ENCODE measurements at regions of chr6 and their contacts with region 1.

Region 1: GRCh38 chr6:139369568-139370282 is 4.7 kb downstream of the CITED2 start:
- DNase-seq: no peak
- ATAC-seq: peak in 1 of 2 donors; percentile 4
- H3K4me3 ChIP-seq: peak overlapping the region; percentile 6 to 97 (median 56)
- H3K27ac ChIP-seq: peak overlapping the region; percentile 94 to 97 (median 96)
- H3K4me1 ChIP-seq: peaks cover 24 to 30% of the 10 kb centered on the region in 2 donors
- H3K27me3 ChIP-seq: no peaks in the 10 kb centered on the region
- CTCF ChIP-seq: peak; percentile 44 to 78 (median 74)
- POLR2A ChIP-seq: no peak

Region 2: DNA sequence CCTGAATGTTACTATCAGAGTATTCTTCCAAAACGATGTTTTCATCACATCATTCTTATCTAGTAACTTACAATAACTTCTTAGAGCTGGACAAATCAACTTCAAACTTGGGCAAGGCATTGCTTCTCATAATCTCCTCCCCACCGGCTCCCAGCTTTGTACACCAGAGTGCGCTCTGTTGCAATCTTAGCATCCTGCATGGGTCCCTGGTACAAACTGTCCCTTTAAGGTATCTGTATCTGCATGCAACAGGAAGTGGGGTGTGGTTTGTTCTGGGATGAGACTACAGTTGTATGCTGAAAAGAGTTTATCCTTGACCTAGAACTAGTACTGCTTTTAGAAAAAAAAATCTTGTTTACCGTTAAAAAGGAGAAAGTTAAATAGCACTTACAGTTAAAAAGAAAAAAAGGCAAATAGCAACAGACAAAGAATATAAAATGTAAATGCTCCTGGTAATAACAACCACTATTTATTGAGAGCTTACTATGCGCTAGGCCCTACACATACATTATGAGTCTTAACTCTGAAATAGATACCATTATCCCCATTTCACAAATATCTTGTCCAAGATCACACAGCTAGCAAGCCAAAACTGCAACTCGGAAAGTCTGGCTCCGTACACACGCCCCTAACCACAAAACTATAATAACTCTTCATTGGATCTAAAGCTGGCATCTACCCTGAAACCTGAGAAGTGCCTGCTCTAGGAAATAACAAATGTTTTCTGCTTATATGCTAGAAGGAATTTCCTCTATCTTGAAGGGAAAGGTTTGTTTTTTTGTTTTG is 244.6 kb before region 1 on chr6:
- in situ Hi-C with region 1: loop called in 3 of 4 experiments (anchors 5 to 25 kb)
- intact Hi-C with region 1: no loop called
- DNase-seq: peak; percentile 46 to 51
- ATAC-seq: peak; percentile 71 to 81
- H3K4me3 ChIP-seq: no peak overlapping the region
- H3K27ac ChIP-seq: peak overlapping the region in 2 of 4 donors; percentile 30 to 43
- H3K4me1 ChIP-seq: peaks cover 10 to 17% of the 10 kb centered on the region in 2 donors
- H3K27me3 ChIP-seq: no peaks in the 10 kb centered on the region
- CTCF ChIP-seq: peak in 3 of 5 experiments; percentile 24 to 31 (median 30)
- POLR2A ChIP-seq: no peak

Region 3: GRCh38 chr6:139230391-139230840 is 139.3 kb before region 1 on chr6:
- in situ Hi-C with region 1: loop called in 3 of 4 experiments (anchors 5 kb)
- intact Hi-C with region 1: no loop called
- DNase-seq: peak; percentile 38 to 57
- ATAC-seq: peak; percentile 89 to 90
- H3K4me3 ChIP-seq: no peak overlapping the region
- H3K27ac ChIP-seq: peak overlapping the region; percentile 69 to 77 (median 71)
- H3K4me1 ChIP-seq: peaks cover 15 to 19% of the 10 kb centered on the region in 2 donors
- H3K27me3 ChIP-seq: no peaks in the 10 kb centered on the region
- CTCF ChIP-seq: peak in 1 of 5 experiments; percentile 25
- POLR2A ChIP-seq: no peak

Region 4: GRCh38 chr6:139881728-139882211 is 512.0 kb after region 1 on chr6:
- in situ Hi-C with region 1: no loop called
- intact Hi-C with region 1: loop called (anchors 2 kb)
- DNase-seq: no peak
- ATAC-seq: peak; percentile 33 to 48
- H3K4me3 ChIP-seq: peak overlapping the region in 1 of 4 donors; percentile 3
- H3K27ac ChIP-seq: peak overlapping the region; percentile 59 to 66 (median 65)
- H3K4me1 ChIP-seq: peaks cover 21 to 27% of the 10 kb centered on the region in 2 donors
- H3K27me3 ChIP-seq: no peaks in the 10 kb centered on the region
- CTCF ChIP-seq: peak in 4 of 5 experiments; percentile 42 to 67 (median 57)
- POLR2A ChIP-seq: no peak

Region 5: DNA sequence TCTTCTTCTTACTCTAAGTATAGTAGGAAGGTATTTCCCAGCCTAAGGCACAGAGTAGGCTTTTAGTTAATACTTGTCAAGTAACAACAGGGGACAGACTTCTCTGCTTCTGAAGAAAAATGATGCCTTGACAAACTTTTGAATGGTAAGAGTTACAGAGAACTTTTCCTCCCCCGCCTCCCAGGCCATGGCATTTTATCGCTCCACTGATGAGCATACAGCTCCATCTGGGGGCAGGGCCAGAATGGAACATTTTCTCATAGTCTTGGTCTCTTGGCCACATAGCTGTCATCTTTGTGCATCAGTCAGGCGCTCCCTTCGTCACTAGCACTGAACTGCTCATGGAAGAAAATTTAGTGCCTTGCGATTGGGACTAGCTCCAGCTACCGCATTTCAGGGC is 1071.5 kb after region 1 on chr6:
- in situ Hi-C with region 1: loop called in 2 of 4 experiments (anchors 25 kb)
- intact Hi-C with region 1: loop called (anchors 1 kb)
- DNase-seq: peak; percentile 26 to 40
- ATAC-seq: peak; percentile 77 to 87
- H3K4me3 ChIP-seq: no peak overlapping the region
- H3K27ac ChIP-seq: peak overlapping the region in 1 of 4 donors; percentile 15
- H3K4me1 ChIP-seq: peaks cover 25 to 32% of the 10 kb centered on the region in 2 donors
- H3K27me3 ChIP-seq: no peaks in the 10 kb centered on the region
- CTCF ChIP-seq: peak; percentile 34 to 59 (median 42)
- POLR2A ChIP-seq: no peak